Left ventricle myocardium superior (tissue), 1 donor: ENCODE measurements at regions of chr6 and their contacts with region 1.

Region 1: GRCh38 chr6:129130959-129131681 is 248.2 kb downstream of the LAMA2 start:
- DNase-seq: peak; percentile 54
- ATAC-seq: peak; percentile 81

Region 2: GRCh38 chr6:129050086-129050485 is 81.0 kb before region 1 on chr6:
- intact Hi-C with region 1: no loop called
- DNase-seq: no peak
- ATAC-seq: no peak

Region 3: GRCh38 chr6:129248946-129249345 is 117.8 kb after region 1 on chr6:
- intact Hi-C with region 1: loop called (anchors 10 kb)
- DNase-seq: no peak
- ATAC-seq: peak; percentile 75